WTC11 (cell line): ENCODE measurements at regions of chr5 and their contacts with region 1.

Region 1: DNA sequence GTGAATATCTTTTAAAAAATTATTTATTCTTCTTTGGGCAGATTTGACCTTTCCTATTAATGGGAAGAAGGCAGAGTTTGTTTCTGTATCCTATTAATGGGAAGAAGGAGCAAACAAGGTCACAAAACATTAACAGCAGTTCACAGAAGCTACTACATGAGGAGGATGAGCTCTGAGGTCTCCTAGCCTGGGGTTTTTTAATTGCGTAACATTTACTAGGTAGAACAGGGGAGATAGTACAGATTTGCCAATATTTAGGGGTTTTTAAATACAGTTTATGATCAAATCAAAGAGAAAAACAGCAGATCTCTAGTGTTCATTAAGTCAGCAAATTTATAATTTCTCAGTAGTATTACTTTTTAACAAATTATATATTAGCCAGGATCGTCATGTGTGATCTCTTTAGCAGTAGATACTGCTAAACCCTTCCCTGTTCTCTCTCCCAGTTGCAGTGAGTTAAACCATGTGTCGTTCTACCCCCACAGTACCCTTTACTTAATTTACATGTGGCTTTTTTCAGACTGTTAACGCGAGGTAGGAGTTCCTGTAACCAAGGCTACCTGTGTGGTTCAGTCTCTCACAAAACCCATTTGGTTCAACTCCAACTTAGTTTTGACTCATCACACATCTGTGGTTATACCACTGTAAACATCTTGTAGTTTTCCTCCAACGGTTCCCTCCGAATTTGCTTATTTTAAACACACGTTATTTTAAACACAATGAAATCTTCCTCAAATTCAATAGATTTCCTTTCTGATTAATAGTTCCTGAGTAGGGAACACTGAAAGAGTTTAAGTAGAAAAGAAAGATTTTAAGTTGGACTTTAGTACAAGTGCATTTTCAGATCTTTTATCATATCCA is 13.3 kb downstream of the SLC25A46 start:
- DNase-seq: no peak
- ATAC-seq: peak; percentile 69
- H3K4me3 Mint-ChIP-seq: no peak overlapping the region
- H3K27ac Mint-ChIP-seq: no peak overlapping the region
- H3K4me1 Mint-ChIP-seq: 0 out of 2 replicates have a peak, but pooled peaks cover 3% of the 10 kb centered on the region
- H3K27me3 Mint-ChIP-seq: no peaks in the 10 kb centered on the region
- CTCF ChIP-seq: no peak

Region 2: GRCh38 chr5:110269478-110270142 is 482.5 kb before region 1 on chr5:
- CTCF ChIA-PET with region 1: no interaction called
- POLR2A ChIA-PET with region 1: interaction called, 11 read pairs
- DNase-seq: no peak
- ATAC-seq: no peak
- H3K4me3 Mint-ChIP-seq: no peak overlapping the region
- H3K27ac Mint-ChIP-seq: no peak overlapping the region
- H3K4me1 Mint-ChIP-seq: peaks cover 8% of the 10 kb centered on the region; the same call in 1 of the 2 replicates
- H3K27me3 Mint-ChIP-seq: no peaks in the 10 kb centered on the region
- CTCF ChIP-seq: no peak